AG04450 (cell line): ENCODE measurements at regions of chr1 and their contacts with region 1.

Region 1: DNA sequence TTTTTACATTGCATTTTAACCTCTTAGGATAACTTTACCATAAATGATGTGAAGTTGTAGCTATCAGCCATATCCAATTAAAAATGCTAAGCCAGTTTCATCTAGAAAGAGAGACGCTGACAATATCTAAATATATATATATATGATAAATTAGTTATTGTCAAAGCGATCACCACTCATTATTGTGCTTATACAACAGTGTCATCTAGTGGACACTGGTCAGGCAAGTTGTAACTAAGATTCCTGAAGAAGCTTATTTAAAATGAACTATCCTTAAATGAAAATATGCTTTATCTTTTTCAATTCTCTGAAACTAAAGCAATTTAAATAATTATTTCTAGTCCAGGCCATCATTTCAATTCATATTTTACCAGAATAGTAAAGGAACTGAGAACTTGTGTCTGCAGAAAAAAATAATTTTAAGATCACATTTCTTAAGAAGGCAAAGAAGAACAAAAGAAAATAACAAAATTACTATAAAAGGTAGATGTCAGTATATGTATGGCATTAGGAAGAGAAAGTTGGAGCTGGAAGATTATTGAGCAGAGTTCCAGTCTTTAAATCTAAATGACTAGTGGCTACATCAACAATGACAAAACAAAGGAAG is 193.3 kb upstream of the SNX7 start:
- DNase-seq: peak; percentile 39
- H3K4me3 ChIP-seq: no peak overlapping the region
- H3K27ac ChIP-seq: no peak overlapping the region
- H3K27me3 ChIP-seq: no peaks in the 10 kb centered on the region
- CTCF ChIP-seq: peak; percentile 96

Region 2: DNA sequence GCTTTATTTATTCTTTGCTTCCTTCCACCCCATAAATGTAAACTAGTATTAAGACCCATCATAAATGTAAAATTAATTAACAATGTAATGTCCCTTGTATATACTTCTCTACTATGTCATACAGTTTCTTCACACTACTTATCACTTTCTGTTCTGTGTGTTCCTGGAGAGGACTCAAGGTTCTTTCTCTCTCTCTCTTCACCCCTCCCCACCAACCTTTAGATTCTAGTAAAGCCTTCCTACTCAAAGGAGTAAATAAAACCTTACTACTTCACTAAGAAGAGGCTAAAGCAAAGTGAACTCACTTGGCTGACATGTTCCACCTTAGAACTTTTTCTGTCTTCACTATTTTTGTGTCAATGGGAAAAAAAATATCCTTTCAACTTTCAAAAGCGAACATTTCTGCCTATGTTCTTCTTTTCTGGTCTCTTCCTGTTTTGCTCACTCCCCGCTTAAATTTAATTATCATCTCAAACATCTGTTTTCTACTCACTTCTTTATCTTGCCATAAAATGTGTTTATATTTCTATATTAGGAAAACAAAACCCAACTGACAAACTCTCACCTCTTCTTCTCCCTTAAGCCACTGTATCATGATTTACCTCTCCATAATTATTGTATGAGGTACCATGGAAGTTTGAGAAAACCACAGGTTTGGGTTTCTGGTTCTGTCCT is 807.6 kb before region 1 on chr1:
- CTCF ChIA-PET with region 1: no interaction called
- POLR2A ChIA-PET with region 1: no interaction called
- DNase-seq: no peak
- H3K4me3 ChIP-seq: no peak overlapping the region
- H3K27ac ChIP-seq: no peak overlapping the region
- H3K27me3 ChIP-seq: no peaks in the 10 kb centered on the region
- CTCF ChIP-seq: no peak

Region 3: DNA sequence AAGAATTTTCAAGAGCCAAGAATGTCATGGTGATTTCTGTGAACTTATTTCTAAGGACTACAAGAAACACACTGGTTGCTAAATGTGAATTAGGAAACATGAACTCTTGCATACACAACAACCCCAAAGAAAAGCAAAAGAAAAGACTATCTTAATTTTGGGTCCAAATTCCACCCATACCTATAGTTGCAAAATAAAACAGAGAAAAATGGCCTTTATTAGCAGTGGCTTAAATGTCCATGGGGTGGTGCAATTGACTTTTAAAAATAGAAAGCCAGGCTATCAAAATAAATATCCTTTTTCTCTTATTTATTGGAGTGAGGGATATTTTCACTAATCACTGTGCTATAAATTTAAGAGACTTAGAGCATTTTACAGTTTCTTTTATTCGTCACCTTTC is 466.4 kb before region 1 on chr1:
- CTCF ChIA-PET with region 1: interaction called, 15 read pairs
- POLR2A ChIA-PET with region 1: no interaction called
- DNase-seq: no peak
- H3K4me3 ChIP-seq: no peak overlapping the region
- H3K27ac ChIP-seq: no peak overlapping the region
- H3K27me3 ChIP-seq: no peaks in the 10 kb centered on the region
- CTCF ChIP-seq: peak; percentile 43

Region 4: GRCh38 chr1:98048244-98048643 is 420.0 kb before region 1 on chr1:
- CTCF ChIA-PET with region 1: interaction called, 124 read pairs
- POLR2A ChIA-PET with region 1: interaction called, 4 read pairs
- DNase-seq: peak; percentile 85
- H3K4me3 ChIP-seq: peak overlapping the region; percentile 61
- H3K27ac ChIP-seq: no peak overlapping the region
- H3K27me3 ChIP-seq: no peaks in the 10 kb centered on the region
- CTCF ChIP-seq: peak; percentile 27

Region 5: DNA sequence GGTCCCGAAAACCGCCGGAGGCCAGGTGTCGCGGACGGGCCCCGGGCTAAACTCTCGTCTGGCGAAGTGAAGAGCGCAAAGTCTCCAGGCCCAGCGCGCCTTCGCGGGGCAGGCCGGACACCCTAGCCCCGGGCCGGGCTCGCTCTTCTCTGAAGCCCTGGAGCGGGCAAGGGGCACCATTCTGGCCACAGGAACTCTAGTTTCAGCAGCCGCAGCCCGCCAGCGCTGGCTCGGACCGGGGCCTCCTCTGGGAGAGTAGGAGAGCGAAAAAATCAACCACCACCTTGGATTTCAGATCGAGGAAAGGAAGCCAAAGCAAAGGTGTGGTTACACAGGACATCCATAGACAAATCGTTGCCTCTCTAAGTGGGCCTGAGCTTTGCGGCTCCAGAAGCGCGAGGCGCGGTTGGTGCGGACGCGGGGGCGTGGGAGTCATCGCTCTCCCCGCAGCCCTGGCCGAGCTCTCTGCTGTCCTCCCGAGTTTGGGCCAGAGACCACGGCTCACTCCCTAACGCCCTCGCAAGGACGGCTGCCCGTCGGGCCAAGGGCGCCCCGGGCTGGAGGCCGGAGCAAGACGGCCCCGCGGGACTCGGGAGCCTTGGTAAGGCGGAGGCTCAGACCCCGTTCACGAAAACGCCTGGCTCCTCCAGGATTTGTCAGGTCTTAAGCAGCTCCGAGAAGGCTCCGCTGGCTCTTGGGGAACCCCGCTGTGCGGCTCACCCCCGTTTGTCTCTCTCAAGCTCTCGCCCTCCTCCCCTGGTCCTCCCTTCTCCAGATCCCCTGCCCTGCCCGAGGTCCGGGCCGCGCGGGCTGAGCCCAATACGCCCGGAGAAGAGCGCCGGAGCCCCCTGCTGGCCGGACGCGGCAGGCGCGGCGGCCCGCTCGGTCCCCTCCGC is 414.5 kb before region 1 on chr1:
- CTCF ChIA-PET with region 1: interaction called, 124 read pairs
- POLR2A ChIA-PET with region 1: interaction called, 4 read pairs
- DNase-seq: no peak
- H3K4me3 ChIP-seq: peak overlapping the region; percentile 53
- H3K27ac ChIP-seq: peak overlapping the region; percentile 88
- H3K27me3 ChIP-seq: no peaks in the 10 kb centered on the region
- CTCF ChIP-seq: peak; percentile 69

Region 6: GRCh38 chr1:98336472-98337083 is 131.6 kb before region 1 on chr1:
- CTCF ChIA-PET with region 1: no interaction called
- POLR2A ChIA-PET with region 1: no interaction called
- DNase-seq: no peak
- H3K4me3 ChIP-seq: no peak overlapping the region
- H3K27ac ChIP-seq: no peak overlapping the region
- H3K27me3 ChIP-seq: no peaks in the 10 kb centered on the region
- CTCF ChIP-seq: no peak

Region 7: GRCh38 chr1:98496246-98496995 is 28.2 kb after region 1 on chr1:
- CTCF ChIA-PET with region 1: no interaction called
- POLR2A ChIA-PET with region 1: no interaction called
- DNase-seq: no peak
- H3K4me3 ChIP-seq: no peak overlapping the region
- H3K27ac ChIP-seq: no peak overlapping the region
- H3K27me3 ChIP-seq: no peaks in the 10 kb centered on the region
- CTCF ChIP-seq: no peak